Activated naive CD4-positive, alpha-beta T cell treated with anti-CD3 and anti-CD28 coated beads, Interleukin-2, amount 10 ng/mL, durations not matched to agents 7 days and 5 days (primary cell): ENCODE measurements at regions of chr5 and their contacts with region 1.

Region 1: GRCh38 chr5:178461004-178461730 is 129.0 kb downstream of the COL23A1 start:
- DNase-seq: peak; percentile 63
- H3K4me3 Mint-ChIP-seq: no peak overlapping the region
- H3K27ac Mint-ChIP-seq: no peak overlapping the region
- H3K4me1 Mint-ChIP-seq: no peaks in the 10 kb centered on the region
- H3K27me3 Mint-ChIP-seq: peaks cover 6% of the 10 kb centered on the region

Region 2: GRCh38 chr5:178223828-178224335 is 237.3 kb before region 1 on chr5:
- CTCF ChIA-PET with region 1: no interaction called
- DNase-seq: no peak
- H3K4me3 Mint-ChIP-seq: no peak overlapping the region
- H3K27ac Mint-ChIP-seq: no peak overlapping the region
- H3K4me1 Mint-ChIP-seq: peaks cover 38% of the 10 kb centered on the region
- H3K27me3 Mint-ChIP-seq: no peaks in the 10 kb centered on the region

Region 3: GRCh38 chr5:178471711-178472110 is 10.5 kb after region 1 on chr5:
- CTCF ChIA-PET with region 1: interaction called, 10 read pairs
- DNase-seq: no peak
- H3K4me3 Mint-ChIP-seq: no peak overlapping the region
- H3K27ac Mint-ChIP-seq: no peak overlapping the region
- H3K4me1 Mint-ChIP-seq: peaks cover 5% of the 10 kb centered on the region
- H3K27me3 Mint-ChIP-seq: peaks cover 3% of the 10 kb centered on the region